ENCODE measurements at regions of chr22 and their contacts with region 1.

Region 1: DNA sequence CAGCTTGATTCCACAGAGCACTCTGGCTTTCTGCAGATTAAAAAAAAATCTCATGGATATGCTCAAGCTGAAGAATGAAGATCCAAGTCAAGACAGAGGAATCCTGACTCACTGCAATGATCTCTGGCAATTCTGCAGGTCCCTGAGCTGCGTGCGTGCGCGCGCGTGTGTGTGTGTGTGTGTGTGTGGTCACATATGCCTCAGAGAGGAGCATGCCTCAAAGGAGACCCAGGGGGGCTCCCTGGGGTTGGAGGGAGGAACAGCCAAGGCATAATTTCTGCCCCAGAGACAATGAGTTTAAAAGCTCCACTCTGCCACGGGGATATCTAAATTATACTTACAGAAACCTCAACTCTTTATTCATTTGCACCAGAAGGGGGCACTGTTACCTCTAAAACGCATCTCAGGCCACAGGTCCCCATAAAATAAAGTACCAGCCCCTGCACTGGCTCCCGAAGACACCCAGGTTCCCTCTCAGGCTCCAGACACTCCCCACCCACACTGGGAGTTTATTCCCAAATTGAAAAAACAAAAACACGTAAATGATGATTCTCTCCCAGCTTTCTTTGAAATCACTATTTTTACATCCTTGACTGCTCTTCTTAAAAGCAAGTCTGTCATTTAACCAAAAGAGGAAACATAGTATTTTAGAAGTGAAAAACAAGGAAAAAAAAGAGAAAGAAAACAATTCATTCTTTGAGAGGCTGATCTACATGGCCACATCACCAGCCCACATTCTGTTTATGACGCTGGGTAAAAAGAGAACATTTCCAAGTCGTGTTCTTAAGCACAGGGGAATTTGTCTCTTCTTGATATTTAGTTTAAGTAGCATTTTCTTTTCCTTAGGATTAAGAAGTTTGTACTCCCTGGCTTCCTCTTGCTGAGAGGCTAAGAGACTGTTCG is 401.0 kb downstream of the LARGE1 start:
- DNase-seq: no peak
- H3K4me3 ChIP-seq: no peak overlapping the region
- H3K27ac ChIP-seq: no peak overlapping the region
- H3K4me1 ChIP-seq: no peaks in the 10 kb centered on the region
- H3K27me3 ChIP-seq: no peaks in the 10 kb centered on the region
- CTCF ChIP-seq: peak; percentile 34 to 72 (median 46)

Region 2: DNA sequence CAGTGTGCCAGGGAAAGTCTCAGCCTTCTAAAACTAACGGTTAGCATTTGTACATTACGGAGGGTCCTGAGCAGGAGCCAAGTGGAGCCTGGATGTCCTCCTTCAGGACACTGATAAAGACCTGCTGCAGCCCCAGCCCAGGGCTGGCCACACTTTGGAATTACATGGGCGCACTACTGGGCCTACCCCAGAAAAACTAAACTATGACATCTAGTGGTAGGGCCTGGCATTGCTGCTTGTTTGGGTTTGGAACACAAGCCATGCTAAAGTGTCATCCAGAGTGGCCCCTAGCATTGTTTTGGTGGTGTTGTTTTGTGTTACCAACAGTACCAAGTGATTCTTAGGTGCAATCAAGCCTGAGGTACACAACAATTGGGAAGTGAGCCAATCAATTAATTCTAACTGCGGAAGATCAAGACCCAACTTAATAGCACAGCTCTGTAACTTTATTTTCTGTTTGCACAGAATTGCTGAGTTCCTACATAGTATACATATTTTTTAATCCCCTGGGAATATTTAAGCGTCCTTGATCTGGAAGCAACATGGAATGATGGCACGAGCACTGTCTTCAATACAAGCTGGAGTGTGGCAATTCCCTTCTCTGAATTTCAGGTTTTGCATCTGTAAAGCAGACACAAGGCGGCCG is 60.2 kb after region 1 on chr22:
- intact Hi-C with region 1: loop called (anchors 1 kb)
- DNase-seq: no peak
- H3K4me3 ChIP-seq: no peak overlapping the region
- H3K27ac ChIP-seq: no peak overlapping the region
- H3K4me1 ChIP-seq: no peaks in the 10 kb centered on the region
- H3K27me3 ChIP-seq: no peaks in the 10 kb centered on the region
- CTCF ChIP-seq: peak; percentile 47 to 81 (median 74)